ENCODE measurements at regions of chr1 and their contacts with region 1.

Region 1: GRCh38 chr1:30929135-30929889 is 20.8 kb upstream of the SDC3 start:
- DNase-seq: peak; percentile 70
- ATAC-seq: peak; percentile 88
- H3K4me3 Mint-ChIP-seq: no peak overlapping the region
- H3K27ac Mint-ChIP-seq: no peak overlapping the region
- H3K4me1 Mint-ChIP-seq: peaks cover 5% of the 10 kb centered on the region
- H3K27me3 Mint-ChIP-seq: no peaks in the 10 kb centered on the region
- CTCF ChIP-seq: peak; percentile 82

Region 2: DNA sequence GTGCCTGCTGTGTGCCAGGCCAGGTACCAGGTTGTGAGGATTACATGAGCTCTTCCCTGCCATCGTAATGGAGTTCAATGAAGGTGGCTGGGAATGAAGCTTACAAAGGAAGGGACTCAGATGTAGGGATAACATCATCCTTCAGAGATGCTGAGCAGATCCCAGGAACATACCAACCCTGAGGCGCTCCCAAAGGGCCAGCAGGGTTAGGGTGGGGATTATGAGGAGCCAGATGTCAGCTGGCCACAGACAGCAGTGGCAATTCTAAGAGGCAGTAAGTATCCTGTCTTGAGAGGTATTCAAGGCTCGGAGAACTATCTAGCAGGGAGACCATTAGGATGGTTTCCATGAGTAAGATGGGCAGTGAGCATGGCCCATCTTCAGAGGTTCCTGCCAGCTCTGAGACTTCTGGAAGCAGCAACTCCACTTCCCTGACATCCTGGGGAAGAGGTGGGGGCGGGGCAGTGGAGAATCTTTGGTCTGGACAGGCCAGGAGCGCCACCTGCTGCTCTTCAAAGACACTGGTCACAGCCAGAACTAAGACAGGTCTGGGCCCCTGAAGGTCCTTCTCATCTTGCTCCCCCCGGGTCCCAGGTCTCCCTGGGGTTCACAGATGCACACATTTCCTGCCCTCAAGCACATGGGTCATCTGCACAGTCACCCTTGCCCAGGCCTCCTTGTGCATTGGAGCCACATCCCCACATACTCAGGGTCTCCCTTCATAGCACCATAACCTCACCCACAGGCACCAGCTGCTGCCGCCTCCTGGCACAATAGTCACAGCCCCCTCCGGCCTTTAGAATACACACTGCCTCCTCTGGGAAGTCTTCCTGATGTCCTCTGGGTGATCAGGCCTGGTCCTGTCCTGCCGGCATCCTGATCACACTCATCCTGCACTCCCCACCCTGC is 18.0 kb before region 1 on chr1:
- CTCF ChIA-PET with region 1: interaction called, 19 read pairs
- POLR2A ChIA-PET with region 1: interaction called, 3 read pairs
- intact Hi-C with region 1: no loop called
- DNase-seq: peak; percentile 80
- ATAC-seq: peak; percentile 64
- H3K4me3 Mint-ChIP-seq: no peak overlapping the region
- H3K27ac Mint-ChIP-seq: no peak overlapping the region
- H3K4me1 Mint-ChIP-seq: peaks cover 9% of the 10 kb centered on the region
- H3K27me3 Mint-ChIP-seq: peaks cover 32% of the 10 kb centered on the region
- CTCF ChIP-seq: peak; percentile 74

Region 3: GRCh38 chr1:30919025-30919881 is 10.1 kb before region 1 on chr1:
- CTCF ChIA-PET with region 1: interaction called, 33 read pairs
- POLR2A ChIA-PET with region 1: interaction called, 4 read pairs
- intact Hi-C with region 1: no loop called
- DNase-seq: no peak
- ATAC-seq: no peak
- H3K4me3 Mint-ChIP-seq: no peak overlapping the region
- H3K27ac Mint-ChIP-seq: no peak overlapping the region
- H3K4me1 Mint-ChIP-seq: peaks cover 2% of the 10 kb centered on the region
- H3K27me3 Mint-ChIP-seq: peaks cover 2% of the 10 kb centered on the region
- CTCF ChIP-seq: no peak

Region 4: GRCh38 chr1:30942326-30942963 is 13.1 kb after region 1 on chr1:
- CTCF ChIA-PET with region 1: interaction called, 17 read pairs
- POLR2A ChIA-PET with region 1: interaction called, 3 read pairs
- intact Hi-C with region 1: no loop called
- DNase-seq: no peak
- ATAC-seq: no peak
- H3K4me3 Mint-ChIP-seq: no peak overlapping the region
- H3K27ac Mint-ChIP-seq: peak overlapping the region; percentile 72
- H3K4me1 Mint-ChIP-seq: no peaks in the 10 kb centered on the region
- H3K27me3 Mint-ChIP-seq: no peaks in the 10 kb centered on the region
- CTCF ChIP-seq: no peak